Right ventricle myocardium superior (tissue), 1 donor: ENCODE measurements at regions of chr3 and their contacts with region 1.

Region 1: GRCh38 chr3:112519424-112520001 is 20.2 kb upstream of the BTLA start:
- DNase-seq: no peak
- ATAC-seq: peak; percentile 69

Region 2: GRCh38 chr3:112293368-112294321 is 225.9 kb before region 1 on chr3 and contains the start of gene SLC9C1:
- intact Hi-C with region 1: loop called (anchors 5 kb)
- DNase-seq: no peak
- ATAC-seq: peak; percentile 94
- total RNA-seq, gene SLC9C1: 1.7 TPM

Region 3: DNA sequence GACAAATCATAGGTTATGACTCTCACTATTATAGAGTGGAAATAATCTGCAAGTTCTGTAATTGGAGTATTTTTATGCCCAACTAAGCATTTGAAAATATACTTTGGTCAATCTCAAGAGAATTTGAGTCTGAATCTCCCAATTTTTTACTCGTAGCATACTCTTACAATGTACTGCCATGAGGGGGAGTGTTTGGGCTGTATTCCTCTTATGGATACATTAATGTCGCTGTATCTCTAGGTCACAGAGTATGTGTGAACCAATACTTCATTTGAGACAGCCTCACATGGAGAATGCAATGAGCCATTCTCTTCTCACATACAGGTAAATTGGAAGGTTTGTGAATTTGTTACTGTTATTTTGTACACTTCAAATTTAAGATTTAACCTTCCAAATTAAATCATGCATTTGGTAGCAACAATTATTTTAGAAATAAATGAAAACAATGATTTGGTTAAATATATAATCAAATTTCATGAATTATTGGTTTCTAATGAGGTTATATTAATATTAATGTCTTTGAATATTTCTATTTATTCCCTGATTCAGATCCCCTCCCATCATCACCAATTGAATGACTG is 192.1 kb before region 1 on chr3:
- intact Hi-C with region 1: loop called (anchors 10 kb)
- DNase-seq: no peak
- ATAC-seq: peak; percentile 86

Region 4: GRCh38 chr3:112773864-112774590 is 254.5 kb after region 1 on chr3:
- intact Hi-C with region 1: no loop called
- DNase-seq: no peak
- ATAC-seq: no peak